ENCODE measurements at regions of chr5 and their contacts with region 1.

Region 1: GRCh38 chr5:147628058-147628895 is 118.4 kb upstream of the DPYSL3 start:
- DNase-seq: peak; percentile 53
- ATAC-seq: peak; percentile 95
- H3K4me3 ChIP-seq: no peak overlapping the region
- H3K27ac ChIP-seq: no peak overlapping the region
- H3K4me1 ChIP-seq: no peaks in the 10 kb centered on the region
- H3K27me3 ChIP-seq: no peaks in the 10 kb centered on the region
- CTCF ChIP-seq: peak; percentile 83

Region 2: DNA sequence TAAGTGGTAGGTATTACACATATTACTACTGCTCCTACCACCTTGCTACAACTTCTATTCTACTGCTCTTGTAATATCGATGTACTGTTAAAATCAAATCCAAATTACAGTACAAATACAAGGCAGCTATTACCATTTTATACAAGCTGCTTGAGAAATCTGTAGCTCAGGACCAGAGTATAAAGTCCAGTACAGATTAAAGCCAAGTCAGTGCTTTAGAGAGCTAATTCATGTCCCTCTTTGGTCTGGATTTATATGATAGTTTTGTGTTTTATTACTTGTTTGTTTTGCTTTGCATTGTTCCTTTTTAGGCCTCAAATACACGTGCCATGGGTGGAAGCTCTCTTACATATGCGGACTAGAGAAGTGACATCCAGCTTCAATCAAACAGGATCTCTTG is 194.2 kb before region 1 on chr5:
- CTCF ChIA-PET with region 1: interaction called, 11 read pairs
- POLR2A ChIA-PET with region 1: no interaction called
- in situ Hi-C with region 1: no loop called
- intact Hi-C with region 1: no loop called
- DNase-seq: no peak
- ATAC-seq: no peak
- H3K4me3 ChIP-seq: no peak overlapping the region
- H3K27ac ChIP-seq: no peak overlapping the region
- H3K4me1 ChIP-seq: no peaks in the 10 kb centered on the region
- H3K27me3 ChIP-seq: peaks cover 2% of the 10 kb centered on the region; the same call in 1 of the 2 replicates
- CTCF ChIP-seq: no peak

Region 3: DNA sequence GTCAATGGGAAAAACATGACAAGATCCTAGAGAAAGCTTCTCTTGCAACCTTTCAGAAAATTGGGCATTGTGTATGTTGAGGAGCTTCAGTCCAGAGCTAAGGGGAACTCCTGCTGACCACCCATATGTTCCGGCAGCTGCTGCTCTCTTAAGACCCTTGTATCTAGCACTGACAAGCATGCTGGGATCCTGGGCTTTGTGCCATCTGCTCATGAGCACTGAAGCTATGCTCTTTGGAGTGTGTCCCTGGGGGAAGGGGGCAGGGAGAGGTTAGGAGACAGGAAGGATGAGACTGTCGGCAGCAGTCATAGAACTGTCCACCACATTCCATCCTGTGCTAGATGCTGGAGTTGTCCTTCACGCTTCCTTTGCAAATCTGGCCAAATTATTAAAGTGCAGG is 45.0 kb after region 1 on chr5:
- CTCF ChIA-PET with region 1: no interaction called
- POLR2A ChIA-PET with region 1: no interaction called
- in situ Hi-C with region 1: no loop called
- intact Hi-C with region 1: loop called (anchors 5 kb)
- DNase-seq: no peak
- ATAC-seq: no peak
- H3K4me3 ChIP-seq: no peak overlapping the region
- H3K27ac ChIP-seq: no peak overlapping the region
- H3K4me1 ChIP-seq: no peaks in the 10 kb centered on the region
- H3K27me3 ChIP-seq: no peaks in the 10 kb centered on the region
- CTCF ChIP-seq: no peak

Region 4: GRCh38 chr5:147822686-147823491 is 194.6 kb after region 1 on chr5:
- CTCF ChIA-PET with region 1: interaction called, 12 read pairs
- POLR2A ChIA-PET with region 1: no interaction called
- in situ Hi-C with region 1: no loop called
- intact Hi-C with region 1: loop called (anchors 1 kb)
- DNase-seq: peak; percentile 61
- ATAC-seq: peak; percentile 78
- H3K4me3 ChIP-seq: no peak overlapping the region
- H3K27ac ChIP-seq: no peak overlapping the region
- H3K4me1 ChIP-seq: no peaks in the 10 kb centered on the region
- H3K27me3 ChIP-seq: no peaks in the 10 kb centered on the region
- CTCF ChIP-seq: peak; percentile 92

Region 5: GRCh38 chr5:147935032-147935431 is 306.8 kb after region 1 on chr5:
- CTCF ChIA-PET with region 1: no interaction called
- POLR2A ChIA-PET with region 1: no interaction called
- in situ Hi-C with region 1: no loop called
- intact Hi-C with region 1: loop called (anchors 5 kb)
- DNase-seq: peak; percentile 62
- ATAC-seq: peak; percentile 78; the same call in 1 of the 2 replicates
- H3K4me3 ChIP-seq: no peak overlapping the region
- H3K27ac ChIP-seq: no peak overlapping the region
- H3K4me1 ChIP-seq: no peaks in the 10 kb centered on the region
- H3K27me3 ChIP-seq: no peaks in the 10 kb centered on the region
- CTCF ChIP-seq: peak; percentile 42; the same call in 1 of the 2 replicates